Endothelial cell of umbilical vein (primary cell): ENCODE measurements at regions of chr13 and their contacts with region 1.

Region 1: DNA sequence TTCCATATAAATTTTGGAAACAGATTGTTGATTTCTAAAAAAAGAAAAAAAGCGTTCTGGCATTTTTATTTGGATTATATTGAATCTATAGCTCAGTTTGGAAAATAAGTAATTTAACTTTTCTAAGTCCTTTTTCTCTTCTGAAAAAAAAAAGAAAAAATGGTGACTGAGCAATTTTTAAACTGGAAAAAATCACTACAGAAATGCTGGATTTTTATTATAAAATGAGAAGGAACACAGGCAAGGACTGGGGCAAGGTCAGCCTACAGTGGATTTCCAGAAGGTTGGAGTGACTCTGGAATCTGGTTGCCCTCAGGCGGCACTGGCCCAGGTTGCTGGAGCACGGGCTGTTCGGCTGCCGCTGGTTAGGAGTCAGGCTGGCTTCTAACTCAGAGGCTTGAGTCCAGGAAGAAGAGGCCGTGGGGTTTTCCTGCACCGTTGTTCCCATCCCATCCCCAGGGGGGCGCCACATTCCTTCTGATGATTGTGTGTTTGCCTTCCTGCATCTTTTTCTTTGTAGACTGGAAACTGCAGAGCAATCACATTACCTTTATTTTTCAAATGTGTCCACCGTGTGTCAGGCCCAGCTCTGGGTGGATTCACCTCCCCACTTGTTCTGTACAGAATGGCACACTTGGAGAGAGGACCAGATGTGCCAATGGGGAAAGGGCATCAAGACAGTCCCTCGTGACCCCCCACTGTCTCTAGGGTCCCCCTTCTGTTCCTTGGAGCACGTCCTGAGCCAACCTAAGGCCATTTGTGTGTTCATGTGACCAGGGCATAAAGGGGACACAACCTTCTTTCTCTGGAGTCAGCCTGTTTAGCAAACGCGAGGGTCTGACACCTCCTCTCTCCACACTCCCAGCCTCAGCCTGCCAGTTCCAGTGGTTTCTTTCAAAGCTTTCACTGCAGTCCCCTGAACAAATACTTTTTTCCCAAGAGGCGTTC is 44.5 kb upstream of the GTF3A start:
- DNase-seq: peak; percentile 34
- H3K4me3 ChIP-seq: no peak overlapping the region
- H3K27ac ChIP-seq: no peak overlapping the region
- H3K4me1 ChIP-seq: no peaks in the 10 kb centered on the region
- H3K27me3 ChIP-seq: peaks cover 6 to 12% of the 10 kb centered on the region in 2 experiments
- CTCF ChIP-seq: peak; percentile 57 to 59
- POLR2A ChIP-seq: no peak

Region 2: GRCh38 chr13:27481766-27482165 is 101.8 kb after region 1 on chr13:
- CTCF ChIA-PET with region 1: no interaction called
- POLR2A ChIA-PET with region 1: no interaction called
- dilution Hi-C with region 1: no loop called
- intact Hi-C with region 1: loop called (anchors 5 kb)
- DNase-seq: peak; percentile 28
- H3K4me3 ChIP-seq: no peak overlapping the region
- H3K27ac ChIP-seq: no peak overlapping the region
- H3K4me1 ChIP-seq: no peaks in the 10 kb centered on the region
- H3K27me3 ChIP-seq: peaks cover 12 to 21% of the 10 kb centered on the region in 2 experiments
- CTCF ChIP-seq: peak; percentile 82 to 86
- POLR2A ChIP-seq: no peak

Region 3: GRCh38 chr13:27599845-27600553 is 220.0 kb after region 1 on chr13:
- CTCF ChIA-PET with region 1: no interaction called
- POLR2A ChIA-PET with region 1: no interaction called
- dilution Hi-C with region 1: no loop called
- intact Hi-C with region 1: no loop called
- DNase-seq: peak; percentile 70
- H3K4me3 ChIP-seq: no peak overlapping the region
- H3K27ac ChIP-seq: peak overlapping the region; percentile 39
- H3K4me1 ChIP-seq: peaks cover 16% of the 10 kb centered on the region
- H3K27me3 ChIP-seq: no peaks in the 10 kb centered on the region
- CTCF ChIP-seq: no peak
- POLR2A ChIP-seq: no peak